Common myeloid progenitor, CD34-positive (primary cell): ENCODE measurements at regions of chr10 and their contacts with region 1.

Region 1: GRCh38 chr10:128069351-128070051 is 56.7 kb downstream of the MKI67 start:
- DNase-seq: peak; percentile 81 to 93 (median 90)
- H3K4me3 ChIP-seq: no peak overlapping the region
- H3K27ac ChIP-seq: no peak overlapping the region
- H3K4me1 ChIP-seq: peaks cover 5 to 37% (median 34%) of the 10 kb centered on the region in 4 experiments
- H3K27me3 ChIP-seq: no peaks in the 10 kb centered on the region

Region 2: DNA sequence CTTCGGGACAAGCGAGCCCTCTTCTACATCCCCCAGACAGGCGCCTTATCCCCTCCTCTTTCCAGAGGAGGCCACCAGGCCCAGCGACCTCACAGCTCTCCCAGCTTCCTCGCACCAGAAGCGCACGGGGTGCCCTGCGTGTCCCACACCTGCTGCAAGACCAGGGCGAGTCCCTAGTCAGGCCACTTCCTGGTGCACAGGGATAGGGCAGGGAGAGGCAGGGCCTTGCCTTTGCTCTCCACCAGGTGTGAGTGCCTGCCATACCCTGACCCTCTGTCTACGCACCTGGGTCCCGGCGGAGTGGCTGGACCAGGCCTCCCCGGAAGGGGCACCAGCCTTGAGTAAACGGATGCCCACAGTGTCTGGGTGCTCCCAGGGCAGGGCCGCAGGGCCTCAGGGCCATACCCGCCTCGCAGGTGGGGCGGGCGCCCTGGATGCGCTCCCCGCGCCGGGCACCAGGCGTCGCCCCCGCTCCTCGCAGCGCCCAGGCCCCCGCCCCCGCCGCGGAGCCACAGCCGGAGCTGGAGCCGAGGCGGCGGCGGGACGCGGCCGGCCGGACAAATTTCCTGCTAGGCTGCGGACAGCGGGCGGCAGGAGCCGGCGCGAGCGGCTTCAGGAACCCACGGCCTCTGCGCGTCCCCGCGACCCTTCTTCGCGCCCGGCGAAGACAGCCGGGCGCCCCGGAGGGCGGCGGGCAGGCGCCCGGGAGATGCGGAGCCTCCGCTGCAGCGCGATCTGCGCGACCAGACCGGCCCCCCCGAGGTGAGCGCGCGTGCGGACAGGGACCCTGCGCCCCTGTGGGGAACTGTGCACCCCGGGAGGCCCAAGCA is 162.7 kb before region 1 on chr10 and contains the start of gene PTPRE:
- CTCF ChIA-PET with region 1: interaction called, 13 read pairs
- POLR2A ChIA-PET with region 1: no interaction called
- DNase-seq: peak; percentile 52 to 70 (median 67)
- H3K4me3 ChIP-seq: peak within 1 kb of the TSS; percentile 44 to 77 (median 67)
- H3K27ac ChIP-seq: no peak within 1 kb of the TSS
- H3K4me1 ChIP-seq: peaks cover 0 to 14% (median 12%) of the 10 kb centered on the region in 4 experiments
- H3K27me3 ChIP-seq: peaks cover 0 to 38% (median 8%) of the 10 kb centered on the region in 5 experiments

Region 3: DNA sequence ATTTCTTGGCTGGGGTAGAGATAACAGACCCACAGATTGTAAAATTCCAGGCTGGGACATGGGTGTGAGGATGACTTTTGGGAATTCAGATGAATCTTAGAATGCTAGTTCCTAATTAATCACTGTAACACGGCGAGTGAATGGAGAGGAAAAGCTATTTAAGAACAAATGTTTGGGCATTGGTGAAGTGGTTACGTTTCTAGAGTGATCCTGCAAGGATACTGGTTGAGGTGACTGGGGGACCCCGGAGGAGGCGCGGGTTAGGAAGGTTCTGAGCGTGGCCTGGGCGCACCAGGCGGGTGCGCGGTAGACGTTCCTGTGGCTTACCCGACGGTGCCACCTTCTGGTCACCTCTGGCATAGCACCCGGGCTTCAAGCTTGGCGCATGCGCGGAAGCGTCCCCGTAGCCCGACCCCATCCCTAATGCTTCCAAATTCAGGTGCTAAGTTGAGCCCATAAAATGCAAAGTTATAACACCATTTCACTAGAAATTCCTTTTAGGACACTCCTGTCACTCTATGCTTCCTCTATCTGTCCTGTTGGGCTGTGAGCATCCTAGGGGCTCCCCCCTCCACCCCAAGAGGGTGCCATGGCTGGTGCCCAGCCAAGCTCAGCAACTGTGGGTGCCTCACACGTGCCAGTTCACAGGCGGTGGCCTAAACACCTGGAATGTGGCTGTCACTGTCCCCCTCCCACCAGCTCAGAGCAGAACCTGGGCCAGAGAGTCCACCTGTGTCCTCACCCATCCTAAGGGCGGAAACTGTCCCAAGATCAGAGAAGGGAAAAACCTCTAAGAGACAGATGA is 58.1 kb before region 1 on chr10:
- CTCF ChIA-PET with region 1: interaction called, 22 read pairs
- POLR2A ChIA-PET with region 1: interaction called, 3 read pairs
- DNase-seq: peak; percentile 73 to 84 (median 74)
- H3K4me3 ChIP-seq: peak overlapping the region in 1 of 7 experiments; percentile 17
- H3K27ac ChIP-seq: no peak overlapping the region
- H3K4me1 ChIP-seq: peaks cover 0 to 6% (median 2%) of the 10 kb centered on the region in 4 experiments
- H3K27me3 ChIP-seq: no peaks in the 10 kb centered on the region

Region 4: DNA sequence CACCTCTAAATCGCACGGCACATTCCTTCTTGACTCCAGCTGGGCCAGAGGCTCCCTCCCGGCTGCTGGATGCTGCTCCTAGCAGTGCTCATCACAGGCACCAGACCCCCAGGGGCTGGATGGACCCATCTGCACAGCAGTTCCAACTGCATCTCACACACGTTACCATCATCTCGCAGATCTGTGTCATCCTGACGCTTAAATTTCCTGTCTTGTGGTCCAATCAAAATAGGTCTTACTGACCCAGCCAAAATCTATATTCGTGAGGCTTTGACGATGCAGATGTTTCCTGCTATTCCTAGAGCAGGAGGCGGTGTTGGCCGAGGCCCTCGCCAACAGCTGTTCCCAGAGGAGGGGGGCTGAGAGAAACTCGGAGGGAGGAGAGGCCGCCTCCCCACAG is 51.3 kb before region 1 on chr10:
- CTCF ChIA-PET with region 1: interaction called, 22 read pairs
- POLR2A ChIA-PET with region 1: interaction called, 3 read pairs
- DNase-seq: peak; percentile 81 to 96 (median 94)
- H3K4me3 ChIP-seq: peak overlapping the region in 2 of 7 experiments; percentile 19 to 39
- H3K27ac ChIP-seq: no peak overlapping the region
- H3K4me1 ChIP-seq: peaks cover 0 to 16% (median 11%) of the 10 kb centered on the region in 4 experiments
- H3K27me3 ChIP-seq: no peaks in the 10 kb centered on the region

Region 5: DNA sequence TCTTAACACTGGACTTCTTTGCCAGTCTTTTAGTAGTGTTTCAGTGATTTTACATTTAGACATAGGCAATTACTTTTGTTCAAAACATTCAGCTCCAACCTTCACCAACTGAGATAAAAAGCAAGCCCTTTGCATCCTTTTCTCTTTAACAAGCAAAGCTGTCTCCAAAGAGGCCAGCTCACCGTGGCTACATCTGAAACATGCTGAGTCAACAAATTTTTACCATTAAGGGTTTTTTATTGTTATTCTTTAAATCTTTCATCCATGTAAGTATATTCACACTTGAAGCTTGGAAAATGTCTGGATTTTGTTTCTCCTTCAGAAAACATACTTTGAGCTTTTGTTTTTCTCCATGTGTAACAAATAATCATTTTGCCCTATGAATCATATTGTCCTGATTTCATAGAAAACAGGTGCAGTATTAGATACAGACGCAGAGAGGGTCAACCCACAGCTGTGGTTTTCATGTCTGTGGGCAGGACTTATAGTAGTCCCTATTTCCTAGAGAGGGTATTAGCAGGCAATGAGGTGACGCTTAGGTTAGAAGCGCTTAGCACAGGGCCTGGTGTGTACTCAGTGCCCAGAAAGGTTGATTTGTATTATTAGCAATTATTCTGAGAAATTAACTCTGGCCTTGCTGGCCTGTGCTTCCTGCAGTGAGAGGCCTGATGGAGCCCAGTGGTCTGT is 42.7 kb before region 1 on chr10:
- CTCF ChIA-PET with region 1: interaction called, 12 read pairs
- POLR2A ChIA-PET with region 1: interaction called, 3 read pairs
- DNase-seq: peak; percentile 46 to 83 (median 51)
- H3K4me3 ChIP-seq: no peak overlapping the region
- H3K27ac ChIP-seq: no peak overlapping the region
- H3K4me1 ChIP-seq: peaks cover 0 to 16% (median 10%) of the 10 kb centered on the region in 4 experiments
- H3K27me3 ChIP-seq: peaks cover 0 to 1% (median 0%) of the 10 kb centered on the region in 5 experiments

Region 6: DNA sequence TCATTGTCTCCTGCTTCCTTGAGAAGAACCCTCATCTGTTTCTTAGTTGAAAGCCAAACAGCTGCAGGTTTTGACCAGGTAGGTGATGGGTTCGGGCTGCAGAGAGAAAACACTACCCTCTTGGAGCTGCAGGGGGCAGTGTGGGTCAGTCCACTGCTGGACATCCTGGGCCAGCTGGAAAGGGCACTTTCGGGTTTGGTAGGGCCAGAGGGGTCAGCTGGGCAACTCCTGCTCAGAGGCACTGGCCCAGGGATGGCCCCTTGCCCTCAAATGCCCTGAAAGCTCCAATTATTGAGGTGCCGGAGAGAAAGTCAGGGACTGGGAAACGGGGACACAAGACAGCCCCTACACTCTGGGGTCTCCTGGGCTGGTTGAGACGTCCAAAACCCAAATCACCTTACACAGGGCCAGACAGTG is 33.9 kb before region 1 on chr10:
- CTCF ChIA-PET with region 1: interaction called, 288 read pairs
- POLR2A ChIA-PET with region 1: interaction called, 16 read pairs
- DNase-seq: peak in 1 of 3 donors; percentile 50
- H3K4me3 ChIP-seq: no peak overlapping the region
- H3K27ac ChIP-seq: no peak overlapping the region
- H3K4me1 ChIP-seq: no peaks in the 10 kb centered on the region
- H3K27me3 ChIP-seq: peaks cover 0 to 1% (median 0%) of the 10 kb centered on the region in 5 experiments

Region 7: GRCh38 chr10:128047351-128047750 is 22.1 kb before region 1 on chr10:
- CTCF ChIA-PET with region 1: interaction called, 288 read pairs
- POLR2A ChIA-PET with region 1: interaction called, 102 read pairs
- DNase-seq: peak; percentile 79 to 90 (median 86)
- H3K4me3 ChIP-seq: peak overlapping the region in 6 of 7 experiments; percentile 57 to 84 (median 66)
- H3K27ac ChIP-seq: peak overlapping the region; percentile 84 to 91
- H3K4me1 ChIP-seq: peaks cover 33 to 70% (median 46%) of the 10 kb centered on the region in 4 experiments
- H3K27me3 ChIP-seq: no peaks in the 10 kb centered on the region